OCI-LY7 (cell line): ENCODE measurements at regions of chr1 and their contacts with region 1.

Region 1: GRCh38 chr1:28144203-28145135 is 32.0 kb downstream of the PTAFR start:
- DNase-seq: peak; percentile 48
- H3K4me3 ChIP-seq: peak overlapping the region; percentile 2
- H3K27ac ChIP-seq: peak overlapping the region; percentile 53
- H3K4me1 ChIP-seq: peaks cover 66% of the 10 kb centered on the region
- CTCF ChIP-seq: no peak

Region 2: GRCh38 chr1:28172713-28173150 is 28.3 kb after region 1 on chr1:
- CTCF ChIA-PET with region 1: no interaction called
- POLR2A ChIA-PET with region 1: interaction called, 32 read pairs
- intact Hi-C with region 1: loop called (anchors 1 kb)
- DNase-seq: peak; percentile 93
- H3K4me3 ChIP-seq: peak overlapping the region; percentile 77
- H3K27ac ChIP-seq: peak overlapping the region; percentile 97
- H3K4me1 ChIP-seq: peaks cover 79% of the 10 kb centered on the region
- CTCF ChIP-seq: no peak